Thyroid gland (tissue), 4 donors: ENCODE measurements at regions of chr3 and their contacts with region 1.

Region 1: GRCh38 chr3:132641837-132642538 is 17.6 kb downstream of the ACAD11 start:
- DNase-seq: no peak
- H3K4me3 ChIP-seq: no peak overlapping the region
- H3K27ac ChIP-seq: no peak overlapping the region
- H3K4me1 ChIP-seq: no peaks in the 10 kb centered on the region
- H3K27me3 ChIP-seq: no peaks in the 10 kb centered on the region
- CTCF ChIP-seq: peak; percentile 41 to 81 (median 79)
- POLR2A ChIP-seq: no peak

Region 2: GRCh38 chr3:132231633-132232032 is 410.4 kb before region 1 on chr3:
- intact Hi-C with region 1: no loop called
- DNase-seq: no peak
- H3K4me3 ChIP-seq: no peak overlapping the region
- H3K27ac ChIP-seq: peak overlapping the region; percentile 3 to 36 (median 32)
- H3K4me1 ChIP-seq: peaks cover 10 to 18% of the 10 kb centered on the region in 2 donors
- H3K27me3 ChIP-seq: no peaks in the 10 kb centered on the region
- CTCF ChIP-seq: no peak
- POLR2A ChIP-seq: no peak

Region 3: GRCh38 chr3:132535575-132536441 is 106.2 kb before region 1 on chr3:
- intact Hi-C with region 1: loop called (anchors 5 kb)
- DNase-seq: peak; percentile 63 to 77
- H3K4me3 ChIP-seq: no peak overlapping the region
- H3K27ac ChIP-seq: peak overlapping the region in 2 of 3 donors; percentile 0 to 31
- H3K4me1 ChIP-seq: peaks cover 18 to 22% of the 10 kb centered on the region in 2 donors
- H3K27me3 ChIP-seq: no peaks in the 10 kb centered on the region
- CTCF ChIP-seq: peak; percentile 35 to 79 (median 58)
- POLR2A ChIP-seq: no peak